Pancreas (tissue), 10 donors: ENCODE measurements at regions of chr21 and their contacts with region 1.

Region 1: DNA sequence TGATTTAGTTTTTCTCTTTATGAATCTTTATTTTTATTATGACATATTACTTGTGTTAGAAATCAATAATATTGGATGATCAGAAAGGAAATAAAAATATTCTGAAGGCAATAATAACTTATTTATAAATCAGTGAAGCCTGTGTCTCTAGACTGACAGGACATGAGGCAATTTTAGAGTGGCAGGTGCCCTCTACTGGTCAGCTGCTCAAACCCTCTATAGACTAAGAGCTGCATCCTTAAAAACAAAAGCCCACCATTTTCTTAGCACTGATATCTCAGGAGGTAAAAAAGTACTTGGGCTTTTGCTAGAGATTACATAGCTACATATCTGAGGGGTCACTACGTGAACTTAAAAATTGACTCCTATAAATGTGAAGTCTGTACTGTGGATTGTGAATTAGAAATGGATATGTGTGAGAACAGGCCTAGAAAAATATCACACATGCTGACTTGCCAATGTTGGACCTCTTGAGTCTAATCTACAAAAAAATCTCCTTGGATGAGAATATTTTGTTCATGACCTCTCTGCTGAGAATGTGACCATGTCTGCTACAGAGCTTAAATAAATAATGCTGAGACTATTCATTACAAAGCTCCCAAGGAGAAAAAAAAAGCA is 597.9 kb upstream of the ADAMTS5 start:
- DNase-seq: peak in 4 of 6 donors; percentile 18 to 45 (median 36)
- ATAC-seq: peak; percentile 64 to 89 (median 81)
- H3K4me3 ChIP-seq: no peak overlapping the region
- H3K27ac ChIP-seq: no peak overlapping the region
- H3K4me1 ChIP-seq: no peaks in the 10 kb centered on the region
- H3K27me3 ChIP-seq: no peaks in the 10 kb centered on the region
- CTCF ChIP-seq: peak in 3 of 4 donors; percentile 30 to 56 (median 49)

Region 2: DNA sequence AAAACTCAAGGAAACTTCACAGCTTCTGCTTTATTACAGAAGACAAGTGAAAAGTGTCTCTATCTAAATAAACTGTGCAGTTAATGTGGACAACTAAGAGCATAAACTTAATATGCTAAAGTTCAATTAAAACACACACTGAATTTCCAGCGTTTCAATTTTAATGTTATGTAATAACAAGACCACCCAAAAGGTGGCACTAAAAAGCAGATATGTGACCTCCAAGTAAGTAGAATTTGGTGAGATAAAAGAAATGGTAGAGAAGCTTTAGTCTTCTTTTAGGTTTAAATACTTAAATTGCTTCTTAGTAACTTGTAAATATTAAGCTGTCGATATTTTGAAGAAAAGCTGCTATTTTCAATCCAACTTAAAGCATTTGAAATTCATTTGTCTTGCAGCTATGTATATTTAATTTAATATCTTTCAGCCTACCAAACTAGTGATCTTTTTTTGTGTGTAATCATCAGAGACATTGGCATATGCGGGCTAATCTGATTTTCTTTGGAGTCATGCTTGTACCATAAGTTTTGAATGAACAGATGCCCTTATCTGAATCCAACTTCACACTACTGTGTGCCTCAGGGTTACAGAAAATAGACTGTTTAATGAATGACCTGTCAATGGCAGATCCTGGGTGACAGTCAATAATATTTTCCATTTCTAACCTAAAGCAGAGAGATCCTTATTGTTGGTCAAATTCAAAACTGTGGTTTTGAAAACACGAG is 683.1 kb before region 1 on chr21:
- intact Hi-C with region 1: loop called in 1 of 3 experiments (anchors 10 kb)
- DNase-seq: no peak
- ATAC-seq: peak in 1 of 4 donors; percentile 44
- H3K4me3 ChIP-seq: no peak overlapping the region
- H3K27ac ChIP-seq: no peak overlapping the region
- H3K4me1 ChIP-seq: no peaks in the 10 kb centered on the region
- H3K27me3 ChIP-seq: no peaks in the 10 kb centered on the region
- CTCF ChIP-seq: peak in 1 of 4 donors; percentile 11

Region 3: DNA sequence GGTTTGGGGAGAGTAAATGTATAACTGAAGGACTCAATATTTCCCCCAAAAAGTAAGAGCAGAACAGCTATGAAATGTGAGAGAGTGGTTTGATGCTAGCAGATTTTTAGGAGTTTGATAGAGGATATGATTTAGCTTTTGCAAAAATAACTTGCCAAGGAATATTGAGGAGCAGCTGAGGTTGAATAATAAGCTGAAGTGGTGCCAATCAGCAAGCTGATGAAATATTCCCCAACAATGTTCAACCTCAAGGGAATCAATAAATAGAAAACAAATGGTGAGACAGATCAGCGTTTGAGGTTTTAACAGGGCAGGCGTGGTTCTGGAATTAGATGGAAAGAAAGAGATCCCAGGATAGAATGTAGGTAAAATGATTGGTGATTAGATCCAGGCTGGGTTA is 184.5 kb before region 1 on chr21:
- intact Hi-C with region 1: no loop called
- DNase-seq: no peak
- ATAC-seq: no peak
- H3K4me3 ChIP-seq: no peak overlapping the region
- H3K27ac ChIP-seq: no peak overlapping the region
- H3K4me1 ChIP-seq: no peaks in the 10 kb centered on the region
- H3K27me3 ChIP-seq: no peaks in the 10 kb centered on the region
- CTCF ChIP-seq: no peak